CD8-positive, alpha-beta memory T cell (primary cell): ENCODE measurements at regions of chr14 and their contacts with region 1.

Region 1: DNA sequence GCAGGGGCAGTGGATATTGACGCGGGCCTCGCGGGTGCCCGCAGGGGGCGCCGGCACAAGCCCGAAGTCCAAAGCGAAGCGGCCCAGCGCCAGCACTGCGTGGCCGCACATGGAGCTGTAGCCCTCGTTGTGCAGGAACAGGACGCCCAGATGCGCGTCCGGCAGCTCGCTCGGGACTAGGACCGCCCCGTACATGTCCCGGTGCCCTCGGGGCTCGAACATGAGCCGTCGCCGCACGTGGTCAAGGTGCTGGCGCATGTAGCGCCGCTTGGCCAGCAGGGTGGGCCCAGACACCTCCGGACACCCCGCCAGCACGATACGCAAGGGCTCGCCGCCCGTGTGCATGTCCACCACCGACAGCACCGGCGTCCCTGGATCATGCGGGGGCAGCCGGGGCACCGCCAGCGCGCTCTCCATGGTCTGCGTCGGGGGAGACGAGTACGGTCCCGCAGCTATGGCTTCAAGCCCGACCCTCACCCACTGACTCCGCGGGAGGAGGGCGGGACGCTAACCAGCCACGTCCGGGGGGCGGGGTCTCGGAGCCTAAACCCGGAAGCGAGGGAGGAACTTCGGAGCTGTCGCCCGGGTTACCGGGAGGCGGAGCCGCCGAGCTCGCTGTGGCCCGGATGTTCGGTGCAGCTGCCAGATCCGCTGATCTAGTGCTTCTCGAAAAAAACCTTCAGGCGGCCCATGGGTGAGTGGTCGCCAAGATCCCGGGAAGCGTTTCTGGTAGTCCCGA is at the starts of genes JKAMP and L3HYPDH:
- DNase-seq: peak; percentile 93 to 98 (median 97)
- H3K4me3 ChIP-seq: peak within 1 kb of the TSS; percentile 87
- H3K4me3 Mint-ChIP-seq: peak within 1 kb of the TSS; percentile 96 to 99 (median 98)
- H3K27ac ChIP-seq: peak within 1 kb of the TSS; percentile 91
- H3K27ac Mint-ChIP-seq: peak within 1 kb of the TSS; percentile 88 to 97 (median 95)
- H3K4me1 ChIP-seq: peaks cover 55% of the 10 kb centered on the region
- H3K4me1 Mint-ChIP-seq: peaks cover 70 to 84% (median 79%) of the 10 kb centered on the region in 3 donors
- H3K27me3 ChIP-seq: no peaks in the 10 kb centered on the region
- H3K27me3 Mint-ChIP-seq: no peaks in the 10 kb centered on the region
- total RNA-seq, gene JKAMP: 22.3 to 30.4 TPM
- total RNA-seq, gene L3HYPDH: 8.1 to 10.1 TPM

Region 2: GRCh38 chr14:59428581-59429012 is 55.5 kb before region 1 on chr14:
- CTCF ChIA-PET with region 1: no interaction called
- POLR2A ChIA-PET with region 1: no interaction called
- DNase-seq: no peak
- H3K4me3 ChIP-seq: no peak overlapping the region
- H3K4me3 Mint-ChIP-seq: no peak overlapping the region
- H3K27ac ChIP-seq: no peak overlapping the region
- H3K27ac Mint-ChIP-seq: no peak overlapping the region
- H3K4me1 ChIP-seq: no peaks in the 10 kb centered on the region
- H3K4me1 Mint-ChIP-seq: no peaks in the 10 kb centered on the region
- H3K27me3 ChIP-seq: no peaks in the 10 kb centered on the region
- H3K27me3 Mint-ChIP-seq: peaks cover 4 to 11% of the 10 kb centered on the region in 2 donors

Region 3: DNA sequence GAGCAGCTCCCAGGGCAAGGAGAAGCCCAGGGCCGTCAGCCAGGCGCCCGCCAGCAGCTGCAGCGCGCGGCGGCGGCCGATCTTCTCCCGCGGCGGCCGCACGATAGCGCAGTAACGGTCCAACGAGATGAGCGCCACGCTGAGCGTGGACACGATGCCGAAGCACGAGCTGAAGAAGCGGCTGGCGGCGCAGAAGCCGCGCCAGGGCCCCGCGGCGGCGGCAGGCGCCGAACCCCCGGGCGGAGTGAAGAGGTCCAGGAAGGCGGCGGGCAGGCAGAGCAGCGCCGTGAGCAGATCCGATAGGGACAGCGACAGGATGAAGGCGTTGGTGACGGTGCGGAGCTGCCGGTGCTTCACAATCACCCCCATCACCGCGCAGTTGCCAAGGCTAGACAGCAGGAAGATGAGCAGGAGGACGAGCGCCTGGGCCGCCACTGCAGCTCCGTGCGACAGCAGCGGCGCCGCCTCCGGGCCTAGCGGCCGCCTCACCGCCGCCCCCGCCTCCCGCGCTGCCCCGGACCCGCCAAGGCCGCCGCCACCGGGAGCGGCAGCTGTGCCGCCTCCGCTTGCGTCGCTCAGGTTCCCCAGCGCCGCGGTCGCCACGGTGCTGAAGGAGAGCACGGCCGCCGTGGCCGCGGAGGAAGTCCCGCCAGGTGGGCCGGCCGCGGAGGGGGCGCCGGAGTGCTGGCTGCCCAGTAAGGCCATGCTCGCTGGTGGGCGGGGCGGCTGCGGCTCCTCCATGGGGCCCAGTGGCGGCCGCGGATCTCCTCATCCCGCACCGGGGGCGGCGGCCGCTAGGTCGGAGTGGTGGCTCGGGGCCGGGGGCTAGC is 19.4 kb before region 1 on chr14:
- CTCF ChIA-PET with region 1: interaction called, 15 read pairs
- POLR2A ChIA-PET with region 1: interaction called, 24 read pairs
- DNase-seq: peak; percentile 39 to 76 (median 60)
- H3K4me3 ChIP-seq: peak overlapping the region; percentile 55
- H3K4me3 Mint-ChIP-seq: peak overlapping the region; percentile 88 to 95 (median 89)
- H3K27ac ChIP-seq: peak overlapping the region; percentile 25
- H3K27ac Mint-ChIP-seq: peak overlapping the region in 7 of 8 donors; percentile 84 to 93 (median 91)
- H3K4me1 ChIP-seq: peaks cover 9% of the 10 kb centered on the region
- H3K4me1 Mint-ChIP-seq: peaks cover 6 to 21% (median 12%) of the 10 kb centered on the region in 3 donors
- H3K27me3 ChIP-seq: no peaks in the 10 kb centered on the region
- H3K27me3 Mint-ChIP-seq: peaks cover 0 to 7% of the 10 kb centered on the region in 2 donors

Region 4: GRCh38 chr14:59520224-59520623 is 36.2 kb after region 1 on chr14:
- CTCF ChIA-PET with region 1: no interaction called
- POLR2A ChIA-PET with region 1: no interaction called
- DNase-seq: no peak
- H3K4me3 ChIP-seq: no peak overlapping the region
- H3K4me3 Mint-ChIP-seq: no peak overlapping the region
- H3K27ac ChIP-seq: no peak overlapping the region
- H3K27ac Mint-ChIP-seq: no peak overlapping the region
- H3K4me1 ChIP-seq: no peaks in the 10 kb centered on the region
- H3K4me1 Mint-ChIP-seq: no peaks in the 10 kb centered on the region
- H3K27me3 ChIP-seq: no peaks in the 10 kb centered on the region
- H3K27me3 Mint-ChIP-seq: peaks cover 2 to 12% of the 10 kb centered on the region in 2 donors

Region 5: DNA sequence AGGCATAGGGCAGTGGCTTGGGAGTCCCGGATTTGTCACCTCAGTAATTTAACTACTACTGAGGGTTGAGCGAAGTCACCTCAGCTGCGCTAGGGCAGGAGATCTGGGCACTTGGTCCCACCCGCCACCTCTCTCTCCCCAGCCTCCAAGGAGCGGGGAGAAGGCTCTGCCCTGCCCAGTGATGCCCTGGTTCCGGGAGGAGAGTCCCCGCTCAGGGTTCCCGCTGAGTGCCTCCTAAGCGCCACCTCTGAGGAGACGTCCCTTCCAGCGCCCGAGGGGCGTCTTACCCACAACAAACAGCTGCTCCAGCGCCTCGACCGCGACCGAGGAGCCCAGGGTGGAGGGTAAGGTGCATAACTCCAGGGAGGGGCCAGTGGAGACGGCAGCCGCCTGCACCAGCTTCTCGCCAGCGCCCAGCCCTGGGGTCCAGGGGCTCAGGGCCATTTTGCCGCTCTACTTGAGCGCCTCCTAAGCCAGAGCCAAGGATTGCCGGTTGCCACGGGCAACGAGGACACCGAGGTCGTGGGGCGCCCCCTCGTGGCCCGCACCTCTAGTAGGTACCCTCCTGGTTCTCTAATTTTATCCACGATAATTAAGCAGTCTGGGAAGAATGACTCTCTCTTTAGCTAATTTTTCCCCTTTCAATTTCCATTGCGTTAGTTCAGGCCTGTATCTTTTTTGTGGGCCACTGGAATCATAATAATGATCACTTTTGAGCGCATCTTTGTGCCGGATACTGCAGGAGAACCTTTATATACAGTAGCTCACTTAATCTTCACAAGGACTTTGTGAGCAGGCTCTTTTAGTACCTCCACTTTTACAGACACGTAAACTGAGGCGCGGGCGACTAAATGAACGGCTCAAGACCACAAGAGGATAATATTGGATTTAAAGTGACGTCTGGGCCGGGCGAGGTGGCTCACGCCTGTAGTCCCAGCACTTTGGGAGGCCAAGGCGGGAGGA is 92.5 kb after region 1 on chr14 and contains the start of gene CCDC175:
- CTCF ChIA-PET with region 1: interaction called, 11 read pairs
- POLR2A ChIA-PET with region 1: no interaction called
- DNase-seq: peak; percentile 69 to 89 (median 71)
- H3K4me3 ChIP-seq: peak within 1 kb of the TSS; percentile 64
- H3K4me3 Mint-ChIP-seq: peak within 1 kb of the TSS; percentile 49 to 91 (median 75)
- H3K27ac ChIP-seq: no peak within 1 kb of the TSS
- H3K27ac Mint-ChIP-seq: peak within 1 kb of the TSS in 2 of 8 donors; percentile 32 to 63
- H3K4me1 ChIP-seq: peaks cover 8% of the 10 kb centered on the region
- H3K4me1 Mint-ChIP-seq: peaks cover 7 to 12% (median 10%) of the 10 kb centered on the region in 3 donors
- H3K27me3 ChIP-seq: no peaks in the 10 kb centered on the region
- H3K27me3 Mint-ChIP-seq: peaks cover 5 to 26% of the 10 kb centered on the region in 2 donors
- total RNA-seq, gene CCDC175: not detected

Region 6: DNA sequence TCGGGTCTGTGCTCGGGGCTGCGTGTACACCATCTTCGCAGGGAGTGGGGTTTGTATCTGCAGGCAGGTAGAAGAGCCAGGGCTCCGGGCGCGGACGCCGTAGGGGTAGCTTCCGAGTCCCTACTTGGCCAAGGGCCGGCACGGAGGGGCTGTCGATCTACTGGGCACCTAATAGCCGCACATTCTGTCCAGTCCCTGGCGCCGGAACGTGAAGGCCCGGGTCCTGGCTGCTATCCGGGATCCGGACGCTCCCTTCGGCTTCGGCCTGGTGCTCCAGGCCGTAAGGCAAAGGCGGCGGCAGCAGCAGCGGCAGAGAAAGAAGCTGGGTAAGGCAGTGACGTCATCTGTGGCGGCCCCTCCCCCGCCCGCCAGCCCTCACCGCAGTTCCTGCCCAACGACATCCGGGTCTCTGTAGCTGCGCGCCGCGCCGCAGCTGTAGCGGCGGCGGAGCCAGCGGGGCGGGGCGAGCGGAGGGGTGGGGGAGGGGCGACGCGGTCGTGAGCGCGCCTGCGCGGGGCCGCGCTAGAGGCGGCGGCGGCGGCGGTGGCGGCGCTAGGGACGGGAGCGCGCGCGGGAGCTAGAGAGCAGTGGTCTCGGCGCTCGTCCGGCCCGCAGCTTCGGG is 764.7 kb after region 1 on chr14 and contains the start of gene PPM1A:
- CTCF ChIA-PET with region 1: no interaction called
- POLR2A ChIA-PET with region 1: interaction called, 12 read pairs
- DNase-seq: peak; percentile 93 to 97 (median 94)
- H3K4me3 ChIP-seq: peak within 1 kb of the TSS; percentile 78
- H3K4me3 Mint-ChIP-seq: peak within 1 kb of the TSS; percentile 90 to 99 (median 95)
- H3K27ac ChIP-seq: peak within 1 kb of the TSS; percentile 94
- H3K27ac Mint-ChIP-seq: peak within 1 kb of the TSS; percentile 97 to 100 (median 100)
- H3K4me1 ChIP-seq: peaks cover 24% of the 10 kb centered on the region
- H3K4me1 Mint-ChIP-seq: peaks cover 50 to 52% (median 52%) of the 10 kb centered on the region in 3 donors
- H3K27me3 ChIP-seq: no peaks in the 10 kb centered on the region
- H3K27me3 Mint-ChIP-seq: peaks cover 0 to 4% of the 10 kb centered on the region in 2 donors
- total RNA-seq, gene PPM1A: 54.6 to 55.3 TPM